MCF 10A (cell line): ENCODE measurements at regions of chr19 and their contacts with region 1.

Region 1: DNA sequence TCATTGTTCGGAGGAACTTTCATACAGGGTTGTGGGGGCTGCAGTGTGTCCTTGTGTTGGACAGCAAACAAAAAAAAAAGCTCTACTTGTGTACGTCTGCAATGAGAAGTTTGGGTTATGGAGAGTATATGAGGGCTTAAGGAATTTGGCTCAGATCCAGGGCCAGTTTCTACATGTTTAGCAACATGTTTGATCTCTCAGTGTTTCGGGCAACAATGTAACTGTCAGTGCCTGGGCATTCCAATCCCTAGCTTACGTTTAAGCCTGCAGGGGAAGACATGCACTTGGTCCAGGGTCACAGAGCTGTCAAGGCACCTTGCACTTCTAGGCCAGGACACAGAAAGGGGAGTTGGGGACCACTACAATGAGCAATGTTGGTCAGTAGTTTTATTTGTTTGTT is 13.9 kb downstream of the ZNF543 start:
- DNase-seq: peak; percentile 80
- H3K4me3 Mint-ChIP-seq: no peak overlapping the region
- H3K27ac Mint-ChIP-seq: peak overlapping the region; percentile 50
- H3K4me1 Mint-ChIP-seq: peaks cover 8% of the 10 kb centered on the region
- H3K27me3 Mint-ChIP-seq: no peaks in the 10 kb centered on the region
- CTCF ChIP-seq: no peak

Region 2: DNA sequence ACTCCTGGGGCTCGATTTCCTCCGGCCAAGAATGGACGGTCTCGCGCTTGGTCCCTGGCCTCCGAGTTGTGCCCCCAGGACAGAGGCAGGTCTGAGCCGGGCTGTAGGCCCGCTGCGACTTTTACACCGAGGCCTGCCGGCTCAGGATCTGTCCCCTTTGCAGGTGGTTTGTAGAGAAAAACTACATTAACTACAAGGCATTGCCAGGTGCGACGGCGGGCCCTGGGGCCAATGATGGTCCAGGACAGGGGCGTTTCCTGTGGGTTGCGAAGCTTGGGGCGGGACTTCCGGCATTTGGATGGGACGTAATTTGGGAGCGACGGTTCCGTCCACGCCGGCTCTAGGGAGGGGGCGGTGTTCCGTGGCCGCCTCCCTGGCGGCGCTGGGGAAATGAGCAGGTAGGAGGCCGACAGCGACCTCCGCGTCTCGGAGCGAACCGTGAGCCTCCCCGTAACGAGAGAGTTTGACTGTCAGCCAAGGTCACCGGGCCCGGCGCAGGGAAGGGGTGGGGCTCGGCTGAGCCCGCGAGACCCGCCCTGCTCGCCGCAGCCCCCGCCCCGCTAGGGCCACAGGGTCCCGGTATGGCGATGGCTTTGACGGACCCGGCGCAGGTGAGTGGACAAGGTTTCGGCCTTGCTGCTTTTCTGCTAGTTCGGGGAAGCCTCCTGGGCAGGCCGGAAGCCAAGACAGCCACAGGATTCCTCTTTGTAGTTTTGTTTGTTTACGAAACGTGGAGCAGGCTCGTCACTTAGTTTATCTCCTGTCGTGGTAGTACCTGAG is 93.7 kb before region 1 on chr19 and contains the start of gene ZNF805:
- CTCF ChIA-PET with region 1: no interaction called
- POLR2A ChIA-PET with region 1: no interaction called
- intact Hi-C with region 1: no loop called
- DNase-seq: peak; percentile 95
- H3K4me3 Mint-ChIP-seq: peak within 1 kb of the TSS; percentile 73
- H3K27ac Mint-ChIP-seq: peak within 1 kb of the TSS; percentile 70
- H3K4me1 Mint-ChIP-seq: peaks cover 6% of the 10 kb centered on the region
- H3K27me3 Mint-ChIP-seq: no peaks in the 10 kb centered on the region
- CTCF ChIP-seq: no peak
- total RNA-seq, gene ZNF805: 11.8 and 12.2 TPM in 2 replicates

Region 3: GRCh38 chr19:57350877-57351805 is 16.9 kb after region 1 on chr19 and contains the start of gene ZNF304:
- CTCF ChIA-PET with region 1: no interaction called
- POLR2A ChIA-PET with region 1: interaction called, 26 read pairs
- intact Hi-C with region 1: no loop called
- DNase-seq: peak; percentile 98
- H3K4me3 Mint-ChIP-seq: peak within 1 kb of the TSS; percentile 90
- H3K27ac Mint-ChIP-seq: peak within 1 kb of the TSS; percentile 97
- H3K4me1 Mint-ChIP-seq: peaks cover 21% of the 10 kb centered on the region
- H3K27me3 Mint-ChIP-seq: no peaks in the 10 kb centered on the region
- CTCF ChIP-seq: no peak
- total RNA-seq, gene ZNF304: 7.0 and 9.9 TPM in 2 replicates

Region 4: GRCh38 chr19:57435062-57435978 is 101.1 kb after region 1 on chr19 and contains the start of gene ZNF749:
- CTCF ChIA-PET with region 1: no interaction called
- POLR2A ChIA-PET with region 1: no interaction called
- intact Hi-C with region 1: no loop called
- DNase-seq: peak; percentile 99
- H3K4me3 Mint-ChIP-seq: peak within 1 kb of the TSS; percentile 99
- H3K27ac Mint-ChIP-seq: peak within 1 kb of the TSS; percentile 93
- H3K4me1 Mint-ChIP-seq: peaks cover 29% of the 10 kb centered on the region
- H3K27me3 Mint-ChIP-seq: no peaks in the 10 kb centered on the region
- CTCF ChIP-seq: no peak
- total RNA-seq, gene ZNF749: 19.1 and 21.2 TPM in 2 replicates